ENCODE measurements at regions of chr6 and their contacts with region 1.

Region 1: GRCh38 chr6:90478789-90479602 is 107.9 kb downstream of the MAP3K7 start:
- DNase-seq: peak; percentile 86
- H3K4me3 ChIP-seq: no peak overlapping the region
- H3K27ac ChIP-seq: no peak overlapping the region
- H3K4me1 ChIP-seq: peaks cover 26% of the 10 kb centered on the region
- CTCF ChIP-seq: peak; percentile 95

Region 2: GRCh38 chr6:89432875-89433251 is 1046.1 kb before region 1 on chr6 and contains the start of gene ANKRD6:
- CTCF ChIA-PET with region 1: no interaction called
- POLR2A ChIA-PET with region 1: no interaction called
- intact Hi-C with region 1: loop called (anchors 5 kb)
- DNase-seq: peak; percentile 79
- H3K4me3 ChIP-seq: peak within 1 kb of the TSS; percentile 70
- H3K27ac ChIP-seq: no peak within 1 kb of the TSS
- H3K4me1 ChIP-seq: peaks cover 22% of the 10 kb centered on the region
- CTCF ChIP-seq: peak; percentile 81
- total RNA-seq, gene ANKRD6: 2.2 and 2.4 TPM in 2 replicates

Region 3: DNA sequence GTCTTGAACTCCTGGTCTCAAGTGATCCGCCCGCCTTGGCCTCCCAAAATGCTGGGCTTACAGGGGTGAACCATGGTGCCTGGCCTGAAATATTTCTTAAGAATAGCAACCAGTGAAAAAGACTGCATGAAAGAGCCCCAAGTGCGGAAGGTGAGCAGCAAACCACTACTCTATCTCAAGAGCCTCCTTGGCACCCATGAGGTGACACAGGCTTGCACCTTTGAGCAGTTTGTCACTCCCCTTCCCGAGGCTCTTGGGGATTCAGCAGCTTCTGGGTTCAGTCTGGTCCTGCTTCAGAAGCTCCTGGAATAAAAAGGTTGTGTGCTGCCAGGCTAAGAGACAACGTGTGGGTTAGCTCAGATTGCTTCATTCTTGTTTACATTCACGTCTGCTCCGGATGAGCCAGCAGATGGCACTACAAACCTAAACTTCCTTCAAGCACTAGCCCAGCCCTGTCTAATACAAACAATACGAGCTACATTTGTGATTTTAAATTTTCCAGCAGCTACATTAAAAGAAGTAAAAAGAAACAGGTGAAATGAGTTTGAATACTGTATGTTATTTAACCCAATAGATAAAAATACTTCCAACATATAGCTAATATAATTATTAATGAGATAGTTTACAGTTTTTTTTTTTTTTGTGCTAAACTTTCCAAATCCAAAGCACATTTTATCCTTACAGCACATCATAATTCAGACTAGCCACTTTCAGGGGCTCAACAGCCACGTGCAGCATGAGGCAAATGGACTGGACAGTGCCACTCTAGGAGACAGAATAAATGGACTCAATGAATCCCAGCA is 538.6 kb before region 1 on chr6:
- CTCF ChIA-PET with region 1: interaction called, 11 read pairs
- POLR2A ChIA-PET with region 1: interaction called, 5 read pairs
- intact Hi-C with region 1: loop called (anchors 1 kb)
- DNase-seq: peak; percentile 71
- H3K4me3 ChIP-seq: no peak overlapping the region
- H3K27ac ChIP-seq: no peak overlapping the region
- H3K4me1 ChIP-seq: no peaks in the 10 kb centered on the region
- CTCF ChIP-seq: peak; percentile 89

Region 4: DNA sequence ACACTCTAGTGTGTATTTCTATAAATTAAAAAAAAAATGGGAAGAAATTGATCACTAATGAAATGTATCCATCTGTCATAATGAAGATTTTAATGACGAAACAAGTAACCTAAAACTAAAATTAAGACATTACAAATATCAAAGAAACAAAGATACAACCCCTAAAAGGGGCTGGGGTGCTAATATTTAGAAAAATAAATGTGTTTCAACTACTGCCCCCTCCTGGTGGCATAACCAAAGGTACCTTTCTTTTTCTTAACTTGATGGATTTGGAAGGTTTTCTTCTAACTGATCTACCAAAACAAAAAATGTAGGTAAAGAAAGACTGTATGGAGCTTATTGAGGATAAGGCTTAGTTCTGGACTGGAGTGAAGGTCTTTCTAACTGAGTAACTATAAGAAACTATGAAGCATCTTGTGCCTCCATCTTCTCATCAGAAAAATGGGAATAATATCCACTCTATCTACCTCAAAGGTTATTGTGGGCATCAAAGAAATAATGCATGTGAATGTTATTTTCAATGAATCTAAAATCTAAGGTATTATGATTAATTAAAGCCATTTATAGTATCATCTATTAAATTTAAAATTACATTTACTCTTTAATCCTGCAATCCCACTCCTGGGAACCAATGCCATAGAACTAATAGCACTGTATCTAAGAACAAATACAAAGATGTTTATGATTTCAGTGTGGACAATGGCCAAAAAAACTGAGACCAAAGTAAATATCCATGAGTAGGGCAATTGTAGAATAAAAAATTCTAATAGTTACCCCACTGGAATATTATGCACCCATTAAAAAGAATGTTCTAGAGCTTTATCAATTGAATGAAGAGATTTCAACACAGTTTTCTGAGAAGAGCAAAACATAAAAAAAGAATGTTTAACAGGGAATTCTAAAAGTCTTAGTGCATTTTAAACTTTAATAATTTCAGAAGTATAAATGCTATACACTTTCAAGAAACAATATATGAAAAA is 299.5 kb before region 1 on chr6:
- CTCF ChIA-PET with region 1: no interaction called
- POLR2A ChIA-PET with region 1: no interaction called
- intact Hi-C with region 1: loop called (anchors 10 kb)
- DNase-seq: no peak
- H3K4me3 ChIP-seq: no peak overlapping the region
- H3K27ac ChIP-seq: no peak overlapping the region
- H3K4me1 ChIP-seq: peaks cover 36% of the 10 kb centered on the region
- CTCF ChIP-seq: peak; percentile 83

Region 5: GRCh38 chr6:90375681-90376439 is 103.1 kb before region 1 on chr6:
- CTCF ChIA-PET with region 1: no interaction called
- POLR2A ChIA-PET with region 1: interaction called, 5 read pairs
- intact Hi-C with region 1: loop called (anchors 5 kb)
- DNase-seq: peak; percentile 97
- H3K4me3 ChIP-seq: peak overlapping the region; percentile 68
- H3K27ac ChIP-seq: peak overlapping the region; percentile 100
- H3K4me1 ChIP-seq: peaks cover 98% of the 10 kb centered on the region
- CTCF ChIP-seq: no peak

Measured in OCI-LY7 (cell line).